Heart left ventricle (tissue), 16 donors: ENCODE measurements at regions of chr16 and their contacts with region 1.

Region 1: DNA sequence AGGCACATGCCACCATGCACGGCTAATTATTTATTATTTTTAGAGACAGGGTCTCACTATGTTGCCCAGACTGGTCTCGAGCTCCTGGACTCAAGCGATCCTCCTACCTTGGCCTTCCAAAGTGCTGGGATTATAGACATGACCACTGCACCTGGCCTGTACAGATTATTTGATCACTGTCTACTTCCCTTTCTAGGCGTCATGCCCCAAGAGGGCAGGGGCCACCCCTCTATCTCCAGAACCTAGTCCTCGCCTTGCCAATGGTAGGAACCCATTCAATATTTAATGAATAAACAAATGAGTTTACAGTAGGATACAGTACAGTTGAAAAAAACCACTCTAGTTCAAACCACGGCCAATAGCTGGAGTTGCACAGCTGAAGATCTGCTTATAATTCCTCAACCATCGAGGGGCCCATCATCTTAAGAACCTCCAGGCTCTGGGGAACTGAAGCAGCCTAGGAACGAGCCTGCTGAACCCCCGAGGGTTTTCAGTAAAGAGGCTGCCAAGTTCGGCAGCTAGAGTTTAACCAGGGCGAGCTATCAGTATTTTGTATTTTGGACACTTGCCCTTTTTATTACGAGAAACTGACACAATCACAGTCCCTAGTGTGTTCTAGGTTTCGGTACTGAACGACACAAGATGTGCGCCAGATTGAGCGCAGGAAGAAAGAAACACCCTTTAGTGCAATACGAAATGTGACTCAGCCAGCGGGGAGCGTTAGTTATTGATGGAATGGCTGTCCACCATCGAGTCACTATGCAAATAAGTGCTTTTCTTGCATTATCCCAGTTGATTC is 14.6 kb downstream of the ADCY9 start:
- DNase-seq: peak in 4 of 5 donors; percentile 33 to 60 (median 46)
- ATAC-seq: peak; percentile 57 to 81 (median 71)
- H3K4me3 ChIP-seq: peak overlapping the region in 5 of 12 donors; percentile 9 to 44 (median 14)
- H3K27ac ChIP-seq: peak overlapping the region in 2 of 12 donors; percentile 2 to 47
- H3K4me1 ChIP-seq: peaks cover 0 to 23% (median 8%) of the 10 kb centered on the region in 12 donors
- H3K27me3 ChIP-seq: no peaks in the 10 kb centered on the region
- CTCF ChIP-seq: no peak
- POLR2A ChIP-seq: no peak

Region 2: DNA sequence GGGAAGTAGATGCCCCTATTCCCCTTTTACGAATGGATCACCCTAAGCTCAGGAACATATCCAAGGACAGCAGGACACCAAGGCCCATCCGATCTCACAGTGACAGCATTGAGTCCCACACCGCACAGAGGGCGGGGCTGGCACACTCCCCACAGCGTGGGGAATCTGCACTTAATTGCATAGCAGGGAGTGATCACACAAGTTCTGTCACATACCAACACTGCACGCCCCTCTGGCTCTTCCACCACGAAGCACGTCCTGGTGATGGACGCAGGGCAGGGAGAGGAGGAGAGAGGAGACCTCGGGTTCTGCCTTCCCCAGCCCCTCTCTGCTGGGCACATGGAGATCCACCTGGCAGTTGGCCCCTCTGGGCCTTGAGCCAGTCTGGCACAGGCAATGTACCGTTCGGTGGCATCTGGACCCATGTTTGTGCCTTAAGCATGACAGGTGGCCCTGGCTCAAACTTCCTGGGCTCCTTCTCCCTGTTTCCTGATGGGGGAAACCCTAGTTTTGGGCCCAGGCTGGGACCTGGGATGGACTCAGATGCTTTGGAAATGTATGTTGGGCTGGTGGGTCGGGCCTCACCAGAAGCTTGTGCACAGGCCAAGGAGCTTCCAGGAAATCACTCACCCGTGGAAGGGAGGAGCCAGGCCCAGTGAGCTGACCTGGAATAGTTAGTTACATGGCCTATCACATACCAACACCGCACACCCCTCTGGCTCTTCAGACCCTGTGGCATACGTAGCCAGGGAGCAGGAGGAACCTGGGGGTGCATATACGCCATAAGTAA is 186.0 kb before region 1 on chr16:
- intact Hi-C with region 1: no loop called
- DNase-seq: no peak
- ATAC-seq: no peak
- H3K4me3 ChIP-seq: no peak overlapping the region
- H3K27ac ChIP-seq: no peak overlapping the region
- H3K4me1 ChIP-seq: no peaks in the 10 kb centered on the region
- H3K27me3 ChIP-seq: no peaks in the 10 kb centered on the region
- CTCF ChIP-seq: no peak
- POLR2A ChIP-seq: no peak

Region 3: DNA sequence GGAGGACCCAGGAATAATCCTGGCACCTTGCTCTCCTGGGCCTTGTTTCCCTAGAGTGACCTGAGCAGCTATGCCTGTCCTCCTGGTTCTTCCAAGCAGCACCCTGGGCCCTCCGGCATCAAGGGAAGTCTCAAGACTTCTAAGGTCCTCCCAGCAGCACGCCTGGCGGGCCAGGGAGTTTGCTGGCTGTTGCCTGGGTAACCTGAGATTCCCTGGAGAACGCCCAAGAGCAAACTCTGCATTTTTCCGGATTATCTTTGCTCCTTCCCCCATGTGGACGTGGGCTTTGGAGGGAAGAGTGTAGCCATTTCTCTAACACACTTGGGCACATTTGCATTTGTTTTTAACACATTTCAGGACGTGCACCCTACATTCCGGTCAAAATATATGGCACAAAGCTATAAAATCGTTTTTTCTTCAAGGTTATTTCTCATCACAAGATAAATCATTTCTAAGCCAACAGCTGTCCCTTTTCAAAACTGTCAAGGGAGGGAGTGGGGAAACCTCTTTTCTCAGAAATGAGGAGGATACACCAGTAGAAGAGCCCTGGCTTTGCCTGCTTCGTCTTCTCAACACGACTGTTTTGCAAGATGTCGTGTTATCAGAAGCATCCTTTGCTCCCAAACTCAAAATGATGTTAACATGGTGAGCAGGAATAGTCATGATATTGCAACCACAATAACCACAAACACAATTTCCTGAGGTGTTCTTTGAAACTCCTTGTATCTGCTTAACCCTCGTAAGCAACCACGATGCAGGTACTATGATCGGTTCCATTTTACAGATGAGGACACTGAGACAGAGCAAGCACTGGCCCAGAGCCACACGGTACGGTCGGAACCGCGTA is 101.9 kb before region 1 on chr16:
- intact Hi-C with region 1: loop called in 2 of 10 experiments (anchors 5 to 10 kb)
- DNase-seq: peak; percentile 52 to 81 (median 63)
- ATAC-seq: peak; percentile 17 to 68 (median 56)
- H3K4me3 ChIP-seq: peak overlapping the region in 3 of 12 donors; percentile 6 to 17 (median 10)
- H3K27ac ChIP-seq: peak overlapping the region in 8 of 12 donors; percentile 8 to 72 (median 52)
- H3K4me1 ChIP-seq: peaks cover 0 to 34% (median 15%) of the 10 kb centered on the region in 12 donors
- H3K27me3 ChIP-seq: no peaks in the 10 kb centered on the region
- CTCF ChIP-seq: no peak
- POLR2A ChIP-seq: no peak

Region 4: GRCh38 chr16:4183237-4184036 is 81.8 kb after region 1 on chr16:
- intact Hi-C with region 1: no loop called
- DNase-seq: peak; percentile 93 to 98 (median 94)
- ATAC-seq: peak; percentile 79 to 96 (median 96)
- H3K4me3 ChIP-seq: peak overlapping the region; percentile 43 to 90 (median 76)
- H3K27ac ChIP-seq: peak overlapping the region; percentile 89 to 99 (median 96)
- H3K4me1 ChIP-seq: peaks cover 0 to 17% (median 7%) of the 10 kb centered on the region in 12 donors
- H3K27me3 ChIP-seq: peaks cover 0 to 12% (median 0%) of the 10 kb centered on the region in 9 donors
- CTCF ChIP-seq: peak in 5 of 12 donors; percentile 14 to 51 (median 43)
- POLR2A ChIP-seq: peak in 1 of 2 donors; percentile 83